ENCODE measurements at regions of chr6 and their contacts with region 1.

Region 1: GRCh38 chr6:148947621-148948444 is 201.0 kb downstream of the UST start:
- DNase-seq: peak; percentile 90
- H3K4me3 ChIP-seq: no peak overlapping the region
- H3K27ac ChIP-seq: no peak overlapping the region
- H3K4me1 ChIP-seq: peaks cover 0 to 74% (median 45%) of the 10 kb centered on the region in 4 donors
- H3K27me3 ChIP-seq: no peaks in the 10 kb centered on the region
- CTCF ChIP-seq: peak; percentile 71 to 92 (median 88)
- EP300 ChIP-seq: no peak
- POLR2A ChIP-seq: no peak

Region 2: DNA sequence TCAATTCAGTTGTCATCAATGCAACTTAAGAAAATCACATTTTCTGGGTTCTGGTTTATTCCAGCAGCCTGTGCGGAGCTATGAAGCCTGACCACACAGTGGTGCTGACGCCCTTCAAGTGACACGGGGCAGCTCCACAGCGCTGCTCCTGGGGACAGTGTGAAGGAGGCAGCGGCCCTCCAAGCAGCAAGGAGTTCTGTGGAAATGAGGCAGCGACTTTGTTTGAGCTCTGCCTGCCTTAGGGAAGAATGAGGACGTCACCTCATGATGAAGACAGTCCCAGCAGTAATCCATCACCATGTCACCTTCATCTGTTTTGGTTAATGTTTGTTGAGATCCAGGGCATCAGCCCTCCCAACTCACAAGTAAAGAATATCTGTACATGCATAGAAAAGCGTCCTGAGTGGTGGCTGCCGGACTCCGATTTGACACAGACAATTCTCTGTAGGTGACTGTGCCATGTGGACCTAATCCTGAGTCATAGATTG is 369.5 kb before region 1 on chr6:
- intact Hi-C with region 1: loop called (anchors 1 kb)
- DNase-seq: peak; percentile 92
- H3K4me3 ChIP-seq: no peak overlapping the region
- H3K27ac ChIP-seq: peak overlapping the region in 1 of 4 donors; percentile 27
- H3K4me1 ChIP-seq: peaks cover 0 to 13% (median 4%) of the 10 kb centered on the region in 4 donors
- H3K27me3 ChIP-seq: no peaks in the 10 kb centered on the region
- CTCF ChIP-seq: peak; percentile 81 to 91 (median 84)
- EP300 ChIP-seq: no peak
- POLR2A ChIP-seq: no peak

Region 3: GRCh38 chr6:148760568-148761526 is 187.0 kb before region 1 on chr6:
- intact Hi-C with region 1: loop called (anchors 5 kb)
- DNase-seq: peak; percentile 93
- H3K4me3 ChIP-seq: peak overlapping the region in 3 of 4 donors; percentile 25 to 39 (median 30)
- H3K27ac ChIP-seq: peak overlapping the region; percentile 75 to 81 (median 78)
- H3K4me1 ChIP-seq: peaks cover 0 to 47% (median 28%) of the 10 kb centered on the region in 4 donors
- H3K27me3 ChIP-seq: no peaks in the 10 kb centered on the region
- CTCF ChIP-seq: no peak
- EP300 ChIP-seq: no peak
- POLR2A ChIP-seq: no peak

Region 4: GRCh38 chr6:148885136-148885870 is 62.5 kb before region 1 on chr6:
- intact Hi-C with region 1: no loop called
- DNase-seq: no peak
- H3K4me3 ChIP-seq: no peak overlapping the region
- H3K27ac ChIP-seq: peak overlapping the region; percentile 23 to 74 (median 51)
- H3K4me1 ChIP-seq: peaks cover 0 to 60% (median 46%) of the 10 kb centered on the region in 4 donors
- H3K27me3 ChIP-seq: no peaks in the 10 kb centered on the region
- CTCF ChIP-seq: no peak
- EP300 ChIP-seq: peak in 1 of 4 donors; percentile 35
- POLR2A ChIP-seq: no peak